Endothelial cell of umbilical vein (primary cell): ENCODE measurements at regions of chr3 and their contacts with region 1.

Region 1: GRCh38 chr3:71050538-71051258 is 532.8 kb downstream of the FOXP1 start:
- DNase-seq: peak; percentile 91
- H3K4me3 ChIP-seq: no peak overlapping the region
- H3K27ac ChIP-seq: peak overlapping the region; percentile 88
- H3K4me1 ChIP-seq: peaks cover 97% of the 10 kb centered on the region
- H3K27me3 ChIP-seq: no peaks in the 10 kb centered on the region
- CTCF ChIP-seq: no peak
- POLR2A ChIP-seq: no peak

Region 2: DNA sequence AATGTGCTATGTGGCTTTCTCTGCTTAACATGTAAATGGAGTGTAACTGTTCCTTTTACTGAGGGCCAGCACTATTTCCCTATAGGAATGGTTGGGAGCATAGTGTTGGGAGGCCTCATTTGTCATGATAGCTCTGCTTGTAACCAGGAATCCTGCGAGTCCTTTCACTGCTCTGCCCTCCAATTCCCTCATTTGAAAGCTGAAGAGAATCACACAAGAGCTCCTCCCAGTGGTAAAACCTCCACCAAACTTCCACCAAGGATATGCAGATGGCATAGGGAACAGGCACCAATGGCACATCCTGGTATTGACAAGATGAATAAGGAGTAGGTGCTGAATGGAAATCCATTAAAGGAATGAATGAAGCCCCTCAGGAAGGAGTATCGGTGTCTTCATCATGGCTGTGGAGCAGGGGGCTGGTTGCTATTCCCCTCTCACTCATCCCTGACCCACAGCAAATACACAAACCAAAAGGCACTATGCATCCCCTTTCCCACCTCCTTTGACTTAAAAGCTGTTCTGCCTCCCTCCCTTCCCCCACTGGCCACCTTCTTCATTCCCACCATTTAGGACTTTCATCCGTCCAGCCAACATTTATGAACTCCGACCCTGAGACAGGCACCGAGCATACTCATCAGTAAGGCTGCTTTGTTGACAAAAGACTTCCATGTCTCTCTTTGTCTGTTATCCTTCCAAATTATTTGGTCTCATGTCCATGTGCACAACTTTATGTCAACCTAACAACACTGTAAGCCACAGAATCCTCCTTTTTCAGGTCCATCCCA is 28.0 kb before region 1 on chr3:
- CTCF ChIA-PET with region 1: interaction called, 15 read pairs
- POLR2A ChIA-PET with region 1: no interaction called
- dilution Hi-C with region 1: no loop called
- intact Hi-C with region 1: no loop called
- DNase-seq: peak; percentile 52
- H3K4me3 ChIP-seq: no peak overlapping the region
- H3K27ac ChIP-seq: no peak overlapping the region
- H3K4me1 ChIP-seq: no peaks in the 10 kb centered on the region
- H3K27me3 ChIP-seq: no peaks in the 10 kb centered on the region
- CTCF ChIP-seq: peak; percentile 20 to 30
- POLR2A ChIP-seq: no peak

Region 3: GRCh38 chr3:71031914-71032521 is 18.7 kb before region 1 on chr3:
- CTCF ChIA-PET with region 1: interaction called, 10 read pairs
- POLR2A ChIA-PET with region 1: no interaction called
- dilution Hi-C with region 1: no loop called
- intact Hi-C with region 1: loop called (anchors 1 kb)
- DNase-seq: peak; percentile 49
- H3K4me3 ChIP-seq: no peak overlapping the region
- H3K27ac ChIP-seq: no peak overlapping the region
- H3K4me1 ChIP-seq: peaks cover 27% of the 10 kb centered on the region
- H3K27me3 ChIP-seq: no peaks in the 10 kb centered on the region
- CTCF ChIP-seq: no peak
- POLR2A ChIP-seq: no peak